Mammary epithelial cell (primary cell): ENCODE measurements at regions of chr6 and their contacts with region 1.

Region 1: GRCh38 chr6:5125152-5126006 is 40.2 kb downstream of the PPP1R3G start:
- DNase-seq: peak; percentile 93
- H3K4me3 ChIP-seq: no peak overlapping the region
- H3K27ac ChIP-seq: peak overlapping the region; percentile 54
- H3K4me1 ChIP-seq: peaks cover 24% of the 10 kb centered on the region
- H3K27me3 ChIP-seq: no peaks in the 10 kb centered on the region
- CTCF ChIP-seq: no peak

Region 2: DNA sequence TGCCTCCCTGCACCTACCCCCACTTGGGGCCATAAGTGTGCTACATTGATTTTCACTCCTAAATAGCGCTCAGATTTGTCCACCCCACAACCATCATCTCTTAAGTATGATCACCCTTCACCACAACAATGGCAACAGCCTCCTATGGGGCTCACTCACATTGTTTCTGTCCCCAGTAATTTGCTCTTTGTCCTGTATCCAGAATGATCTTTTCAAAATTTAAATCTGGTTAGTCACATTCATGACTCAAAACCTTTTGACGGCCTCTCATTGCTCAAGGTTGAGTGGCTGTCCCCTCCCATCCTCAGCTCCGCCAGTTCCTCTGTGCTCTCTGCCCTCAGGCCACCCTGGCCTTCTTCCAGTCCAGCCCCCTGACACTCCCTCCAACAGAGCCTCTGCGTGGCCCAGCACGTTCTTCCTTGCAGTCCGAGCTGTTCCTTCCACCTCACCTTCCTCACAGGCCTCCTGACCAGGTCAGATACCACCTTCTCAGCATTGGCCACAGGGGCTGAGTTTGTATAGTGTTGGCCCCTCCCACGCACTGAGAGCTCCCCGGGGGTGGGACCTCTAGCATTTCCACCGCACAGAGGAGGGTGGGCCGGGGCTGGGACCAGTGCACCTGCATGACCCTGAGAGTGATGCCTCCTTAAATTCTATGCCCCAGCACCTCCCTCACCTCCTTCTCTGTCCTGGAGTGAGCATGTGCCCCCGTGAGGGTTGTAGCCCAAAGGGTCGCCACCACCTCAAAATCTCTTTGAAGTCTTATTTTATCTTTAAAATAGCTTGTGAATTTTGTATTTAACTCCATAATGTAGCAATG is 42.7 kb before region 1 on chr6:
- CTCF ChIA-PET with region 1: no interaction called
- dilution Hi-C with region 1: no loop called
- in situ Hi-C with region 1: no loop called
- intact Hi-C with region 1: loop called (anchors 2 kb)
- DNase-seq: peak; percentile 95
- H3K4me3 ChIP-seq: no peak overlapping the region
- H3K27ac ChIP-seq: no peak overlapping the region
- H3K4me1 ChIP-seq: peaks cover 39% of the 10 kb centered on the region
- H3K27me3 ChIP-seq: peaks cover 8% of the 10 kb centered on the region
- CTCF ChIP-seq: no peak

Region 3: DNA sequence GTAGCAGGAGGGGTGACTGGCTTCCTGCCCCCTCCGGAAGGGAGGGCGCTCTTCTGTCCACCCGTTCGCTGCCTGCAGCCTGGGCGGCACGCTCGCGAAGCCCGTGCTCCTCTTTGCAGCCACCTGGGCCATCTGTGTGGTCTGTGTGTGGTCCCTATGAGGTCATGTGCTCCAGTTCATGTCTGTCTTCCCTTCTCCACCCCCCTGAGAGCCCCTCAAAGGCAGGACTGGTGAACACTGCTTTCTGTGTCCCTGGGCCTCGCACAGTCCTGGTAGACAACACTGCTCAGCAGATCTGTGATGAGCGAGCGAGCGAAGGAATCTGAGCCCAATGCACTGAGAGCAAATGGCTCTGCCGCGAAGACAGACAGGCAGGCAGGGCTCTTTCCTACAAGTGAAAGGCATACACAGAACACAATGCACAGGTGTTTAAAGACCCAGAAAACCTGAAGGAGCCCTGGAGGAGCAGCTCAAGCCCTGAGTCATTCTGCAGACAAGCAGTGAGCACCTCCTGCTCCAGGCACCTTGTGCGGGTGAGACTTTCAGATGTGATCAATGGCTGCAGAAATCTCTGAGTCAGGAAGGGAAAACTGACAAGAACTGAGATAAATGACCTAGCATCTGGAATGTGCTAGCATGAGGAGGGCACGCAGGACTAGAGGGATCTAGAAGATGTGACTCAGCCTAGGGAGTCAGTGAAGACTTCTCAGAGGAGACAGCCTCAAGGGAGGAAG is 13.1 kb before region 1 on chr6:
- CTCF ChIA-PET with region 1: no interaction called
- dilution Hi-C with region 1: no loop called
- in situ Hi-C with region 1: no loop called
- intact Hi-C with region 1: loop called (anchors 1 kb)
- DNase-seq: peak; percentile 97
- H3K4me3 ChIP-seq: no peak overlapping the region
- H3K27ac ChIP-seq: no peak overlapping the region
- H3K4me1 ChIP-seq: peaks cover 17% of the 10 kb centered on the region
- H3K27me3 ChIP-seq: no peaks in the 10 kb centered on the region
- CTCF ChIP-seq: no peak